A673 (cell line): ENCODE measurements at regions of chr6 and their contacts with region 1.

Region 1: GRCh38 chr6:18503593-18504231 is 116.6 kb downstream of the RNF144B start:
- DNase-seq: peak; percentile 88
- H3K4me3 ChIP-seq: no peak overlapping the region
- H3K27ac ChIP-seq: no peak overlapping the region
- H3K4me1 ChIP-seq: peaks cover 30% of the 10 kb centered on the region
- H3K27me3 ChIP-seq: no peaks in the 10 kb centered on the region
- CTCF ChIP-seq: peak; percentile 92

Region 2: DNA sequence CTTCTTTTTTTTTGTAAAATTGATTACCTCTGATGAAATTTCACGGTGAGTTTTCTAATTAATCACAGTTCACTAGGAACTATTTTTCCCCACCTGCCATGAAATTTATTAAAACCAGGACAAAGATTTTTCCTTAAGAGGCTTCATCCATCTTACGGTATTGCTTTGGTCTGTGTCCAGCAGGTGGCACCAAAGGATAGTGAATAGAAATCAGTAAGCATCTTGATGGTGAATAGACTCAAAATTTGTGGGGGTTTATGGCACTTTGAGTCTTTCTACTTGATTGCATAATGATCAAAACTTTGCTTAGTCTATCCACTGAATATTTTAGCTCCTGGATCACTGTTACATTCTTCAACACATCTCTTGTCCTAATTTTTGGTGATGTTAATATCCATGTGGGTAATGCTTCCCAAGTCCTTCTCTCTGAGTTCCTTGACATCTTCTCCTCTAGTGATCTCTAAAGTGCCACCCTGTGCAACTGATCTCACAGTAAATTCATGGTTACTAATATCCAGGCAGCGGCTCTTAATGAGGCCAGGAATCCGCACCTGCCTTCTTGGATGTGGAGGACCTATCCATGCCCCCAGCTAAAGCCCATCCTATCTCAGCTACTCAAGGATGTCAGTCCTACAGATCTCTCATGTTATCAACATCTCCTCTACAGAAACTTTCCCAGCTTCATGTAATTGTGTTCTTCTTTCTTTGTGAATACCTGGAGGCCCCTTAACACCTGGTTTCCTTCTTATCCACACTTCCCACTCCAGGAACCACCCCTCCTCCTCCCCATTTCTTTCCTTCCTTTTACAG is 1347.4 kb before region 1 on chr6:
- CTCF ChIA-PET with region 1: no interaction called
- POLR2A ChIA-PET with region 1: no interaction called
- intact Hi-C with region 1: loop called (anchors 5 kb)
- DNase-seq: peak; percentile 85
- H3K4me3 ChIP-seq: no peak overlapping the region
- H3K27ac ChIP-seq: no peak overlapping the region
- H3K4me1 ChIP-seq: no peaks in the 10 kb centered on the region
- H3K27me3 ChIP-seq: no peaks in the 10 kb centered on the region
- CTCF ChIP-seq: peak; percentile 84

Region 3: DNA sequence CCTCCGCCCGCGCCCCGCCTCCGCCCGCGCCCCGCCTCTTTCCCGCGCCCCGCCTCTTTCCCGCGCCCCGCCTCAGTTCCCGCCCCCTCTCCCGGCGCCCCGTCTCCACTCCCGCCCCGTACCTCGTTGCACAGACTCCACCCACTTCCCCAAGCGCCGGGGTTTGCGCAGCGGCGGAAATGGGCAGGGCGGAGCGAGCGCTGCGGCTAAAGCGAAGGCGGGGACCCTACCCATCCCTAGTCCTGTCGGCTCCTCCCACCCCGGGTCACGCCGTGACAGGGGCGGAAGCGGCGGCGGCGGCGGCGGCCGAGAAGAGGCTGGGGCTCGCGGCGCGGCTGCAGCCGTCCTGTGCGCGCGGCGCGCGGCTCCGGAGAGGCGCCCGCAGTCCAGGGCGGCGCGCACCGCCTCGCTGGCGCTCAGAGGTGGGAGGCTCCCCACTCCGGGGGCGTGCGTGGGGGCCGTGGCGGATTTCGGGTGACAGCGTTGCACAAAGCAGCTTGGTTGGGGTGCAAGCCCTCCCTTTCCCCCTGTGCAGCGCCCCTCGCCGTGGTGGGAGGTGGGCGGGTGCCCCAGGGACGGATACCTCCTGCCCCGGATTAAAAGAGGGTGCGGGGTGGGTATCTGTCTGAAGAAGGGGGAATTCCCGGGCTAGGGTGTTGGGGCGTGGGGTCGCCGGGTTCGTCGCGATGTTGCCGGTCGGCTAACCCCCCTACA is 348.4 kb before region 1 on chr6 and contains the start of gene KDM1B:
- CTCF ChIA-PET with region 1: no interaction called
- POLR2A ChIA-PET with region 1: no interaction called
- intact Hi-C with region 1: loop called (anchors 10 kb)
- DNase-seq: peak; percentile 98
- H3K4me3 ChIP-seq: peak within 1 kb of the TSS; percentile 92
- H3K27ac ChIP-seq: peak within 1 kb of the TSS; percentile 73
- H3K4me1 ChIP-seq: peaks cover 7% of the 10 kb centered on the region
- H3K27me3 ChIP-seq: no peaks in the 10 kb centered on the region
- CTCF ChIP-seq: no peak
- total RNA-seq, gene KDM1B: 15.8 and 17.6 TPM in 2 replicates

Region 4: DNA sequence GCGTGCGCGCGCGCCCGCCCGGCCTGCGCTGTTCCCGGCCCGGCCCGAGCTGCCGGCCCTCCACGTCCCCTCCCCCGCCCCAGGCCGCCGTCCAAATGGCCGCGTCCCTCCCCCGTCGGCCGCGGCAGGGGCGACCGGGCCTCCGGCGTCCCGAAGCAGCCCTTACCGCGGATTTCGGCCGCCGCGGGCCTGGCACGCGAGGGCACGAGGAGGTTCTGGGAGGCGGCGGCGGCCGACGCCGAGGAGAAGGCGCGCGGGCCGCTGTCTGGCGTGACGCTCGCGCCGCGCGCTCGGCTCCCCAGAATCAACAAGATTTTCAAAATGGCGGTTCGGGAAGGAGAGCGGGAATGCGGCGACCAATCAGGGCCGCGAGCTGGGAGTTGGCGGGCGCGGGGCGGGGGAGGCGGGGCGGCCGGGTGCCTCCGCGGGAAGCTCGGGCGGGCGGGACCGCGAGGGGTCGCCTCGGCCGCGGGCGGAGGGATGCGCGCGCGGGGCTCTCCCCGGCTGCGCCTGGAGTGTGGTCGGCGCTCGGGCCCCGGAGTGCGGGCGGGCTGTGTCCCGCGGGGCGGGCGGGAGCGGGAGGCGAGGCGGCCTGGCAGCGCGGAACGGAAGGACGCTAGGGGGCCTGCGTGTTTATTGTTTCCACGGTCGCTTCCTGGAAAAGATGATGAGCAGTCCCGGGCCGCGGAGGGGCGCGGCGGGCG is 239.3 kb before region 1 on chr6 and contains the start of gene DEK:
- CTCF ChIA-PET with region 1: interaction called, 4 read pairs
- POLR2A ChIA-PET with region 1: no interaction called
- intact Hi-C with region 1: loop called (anchors 5 kb)
- DNase-seq: peak; percentile 94
- H3K4me3 ChIP-seq: peak within 1 kb of the TSS; percentile 69
- H3K27ac ChIP-seq: peak within 1 kb of the TSS; percentile 87
- H3K4me1 ChIP-seq: peaks cover 40% of the 10 kb centered on the region
- H3K27me3 ChIP-seq: no peaks in the 10 kb centered on the region
- CTCF ChIP-seq: peak; percentile 53
- total RNA-seq, gene DEK: 224 and 234 TPM in 2 replicates

Region 5: DNA sequence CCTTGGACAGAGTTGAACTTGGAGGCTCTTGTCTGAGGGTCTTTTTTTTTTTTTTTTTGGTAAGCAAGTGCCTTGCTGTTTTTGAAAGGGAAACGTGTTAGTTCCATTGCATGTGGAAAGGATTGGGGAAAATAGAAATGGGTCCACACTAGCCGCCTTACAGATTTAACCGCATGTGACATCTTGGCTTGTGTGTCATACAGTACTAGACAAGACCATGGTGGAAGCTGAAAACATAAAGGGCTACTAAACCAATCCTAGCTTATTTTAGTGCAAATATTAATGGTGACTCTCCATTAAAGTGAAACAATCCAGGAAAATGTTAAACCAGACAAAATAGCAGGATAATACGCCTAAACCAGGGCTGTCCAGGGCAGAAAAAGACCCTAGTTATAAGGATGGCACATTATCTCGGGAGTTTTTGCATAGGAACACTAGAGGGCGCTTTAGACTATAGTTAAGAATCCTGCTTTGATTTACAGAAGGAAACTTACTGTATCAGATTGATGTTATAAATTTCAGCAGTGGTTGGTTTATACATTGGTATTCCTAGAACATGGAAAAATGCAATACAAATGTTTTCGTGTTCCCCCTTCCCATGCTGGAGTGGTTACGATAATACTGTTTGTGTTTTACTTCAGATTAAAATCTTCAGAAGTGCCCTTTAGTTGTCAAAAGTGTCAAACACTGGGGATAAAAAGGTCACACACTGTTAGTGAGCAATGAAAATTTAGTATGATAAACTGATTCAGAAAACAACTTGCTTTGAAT is 179.6 kb before region 1 on chr6:
- CTCF ChIA-PET with region 1: interaction called, 11 read pairs
- POLR2A ChIA-PET with region 1: no interaction called
- intact Hi-C with region 1: loop called (anchors 1 kb)
- DNase-seq: peak; percentile 77
- H3K4me3 ChIP-seq: no peak overlapping the region
- H3K27ac ChIP-seq: no peak overlapping the region
- H3K4me1 ChIP-seq: peaks cover 8% of the 10 kb centered on the region
- H3K27me3 ChIP-seq: no peaks in the 10 kb centered on the region
- CTCF ChIP-seq: peak; percentile 81

Region 6: GRCh38 chr6:18703546-18703945 is 199.8 kb after region 1 on chr6:
- CTCF ChIA-PET with region 1: no interaction called
- POLR2A ChIA-PET with region 1: no interaction called
- intact Hi-C with region 1: no loop called
- DNase-seq: no peak
- H3K4me3 ChIP-seq: no peak overlapping the region
- H3K27ac ChIP-seq: no peak overlapping the region
- H3K4me1 ChIP-seq: no peaks in the 10 kb centered on the region
- H3K27me3 ChIP-seq: no peaks in the 10 kb centered on the region
- CTCF ChIP-seq: no peak